ENCODE measurements at regions of chr1 and their contacts with region 1.

Region 1: GRCh38 chr1:200488375-200489165 is 78.7 kb upstream of the ZNF281 start:
- DNase-seq: peak; percentile 85
- ATAC-seq: peak; percentile 93
- H3K4me3 ChIP-seq: no peak overlapping the region
- H3K27ac ChIP-seq: peak overlapping the region; percentile 13
- H3K4me1 ChIP-seq: peaks cover 10% of the 10 kb centered on the region
- H3K27me3 ChIP-seq: no peaks in the 10 kb centered on the region
- CTCF ChIP-seq: peak; percentile 93
- POLR2A ChIP-seq: peak; percentile 53; the same call in 1 of the 2 replicates
- RAD21 ChIP-seq: peak; percentile 95

Region 2: DNA sequence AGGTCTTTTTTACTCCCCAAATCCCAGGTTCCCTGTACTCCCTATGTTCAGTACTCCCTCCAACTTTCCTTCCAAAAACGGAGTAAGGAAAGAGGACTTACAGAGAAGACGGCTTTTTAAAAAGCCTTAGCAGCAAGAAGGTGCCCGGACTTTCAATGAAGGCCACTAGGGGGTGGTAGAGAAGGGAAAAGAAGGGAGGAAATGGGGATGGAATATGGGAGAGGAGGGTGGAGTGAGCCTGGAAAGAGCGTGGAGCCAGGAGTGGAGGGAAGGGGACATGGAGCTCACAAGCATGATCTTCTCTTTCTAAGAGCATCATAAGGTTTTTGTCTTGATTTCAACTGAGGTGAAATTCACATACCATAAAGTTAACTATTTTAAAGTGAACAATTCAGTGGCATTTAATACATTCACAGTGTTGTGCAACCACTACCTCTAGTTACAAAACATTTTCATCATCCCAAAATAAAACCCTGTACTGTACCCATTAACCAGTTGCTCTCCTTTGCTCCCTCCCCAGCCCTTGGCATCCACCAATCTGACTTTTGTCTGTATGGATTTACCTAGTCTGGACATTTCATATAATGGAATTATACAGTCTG is 208.7 kb before region 1 on chr1:
- CTCF ChIA-PET with region 1: interaction called, 4 read pairs
- POLR2A ChIA-PET with region 1: no interaction called
- dilution Hi-C with region 1: no loop called
- in situ Hi-C with region 1: loop called (anchors 5 kb)
- intact Hi-C with region 1: loop called (anchors 1 kb)
- DNase-seq: peak; percentile 60
- ATAC-seq: peak; percentile 88
- H3K4me3 ChIP-seq: no peak overlapping the region
- H3K27ac ChIP-seq: no peak overlapping the region
- H3K4me1 ChIP-seq: peaks cover 3% of the 10 kb centered on the region
- H3K27me3 ChIP-seq: no peaks in the 10 kb centered on the region
- CTCF ChIP-seq: peak; percentile 73
- POLR2A ChIP-seq: 0 out of 2 replicates have a peak, but pooled peaks have one; percentile 30
- RAD21 ChIP-seq: peak; percentile 80

Region 3: DNA sequence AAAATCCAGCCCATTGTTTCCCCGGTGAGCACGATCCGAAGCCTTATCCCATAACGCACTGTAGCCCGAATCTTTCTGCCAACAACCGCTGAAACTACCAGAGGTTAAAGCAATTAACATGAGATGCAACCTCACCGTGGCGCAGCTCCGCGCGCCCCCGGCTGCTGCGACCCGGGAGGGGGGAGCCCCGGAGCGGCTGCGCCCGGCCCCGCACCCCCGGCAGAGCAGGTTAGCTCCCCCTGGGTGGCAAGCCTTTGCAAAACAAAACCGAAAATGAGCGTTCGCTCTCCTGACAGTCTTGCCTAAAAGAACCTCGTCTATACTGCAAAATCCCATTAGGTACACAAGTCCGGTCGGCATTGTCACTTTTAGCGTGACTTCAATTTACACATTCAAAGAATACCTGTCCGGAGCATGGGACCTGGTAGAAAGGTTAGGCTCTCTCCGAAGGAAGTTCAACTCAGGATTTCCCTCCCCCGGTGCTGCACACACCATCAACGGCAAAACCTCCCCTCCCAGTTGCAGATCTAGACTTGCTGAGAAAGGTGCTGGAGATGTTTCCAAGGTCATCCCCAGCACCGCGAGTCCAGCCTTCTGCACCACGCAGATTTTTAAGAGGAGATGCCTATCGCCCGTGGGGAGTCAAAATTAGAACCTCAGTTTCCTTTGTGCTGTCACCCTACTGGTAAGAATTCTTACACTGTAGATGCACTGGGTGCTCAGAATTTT is 186.2 kb before region 1 on chr1:
- CTCF ChIA-PET with region 1: no interaction called
- POLR2A ChIA-PET with region 1: no interaction called
- dilution Hi-C with region 1: no loop called
- in situ Hi-C with region 1: no loop called
- intact Hi-C with region 1: loop called (anchors 10 kb)
- DNase-seq: peak; percentile 47
- ATAC-seq: peak; percentile 83
- H3K4me3 ChIP-seq: peak overlapping the region; percentile 52
- H3K27ac ChIP-seq: no peak overlapping the region
- H3K4me1 ChIP-seq: peaks cover 4% of the 10 kb centered on the region
- H3K27me3 ChIP-seq: no peaks in the 10 kb centered on the region
- CTCF ChIP-seq: 0 out of 2 replicates have a peak, but pooled peaks have one; percentile 6
- POLR2A ChIP-seq: no peak
- RAD21 ChIP-seq: no peak

Region 4: DNA sequence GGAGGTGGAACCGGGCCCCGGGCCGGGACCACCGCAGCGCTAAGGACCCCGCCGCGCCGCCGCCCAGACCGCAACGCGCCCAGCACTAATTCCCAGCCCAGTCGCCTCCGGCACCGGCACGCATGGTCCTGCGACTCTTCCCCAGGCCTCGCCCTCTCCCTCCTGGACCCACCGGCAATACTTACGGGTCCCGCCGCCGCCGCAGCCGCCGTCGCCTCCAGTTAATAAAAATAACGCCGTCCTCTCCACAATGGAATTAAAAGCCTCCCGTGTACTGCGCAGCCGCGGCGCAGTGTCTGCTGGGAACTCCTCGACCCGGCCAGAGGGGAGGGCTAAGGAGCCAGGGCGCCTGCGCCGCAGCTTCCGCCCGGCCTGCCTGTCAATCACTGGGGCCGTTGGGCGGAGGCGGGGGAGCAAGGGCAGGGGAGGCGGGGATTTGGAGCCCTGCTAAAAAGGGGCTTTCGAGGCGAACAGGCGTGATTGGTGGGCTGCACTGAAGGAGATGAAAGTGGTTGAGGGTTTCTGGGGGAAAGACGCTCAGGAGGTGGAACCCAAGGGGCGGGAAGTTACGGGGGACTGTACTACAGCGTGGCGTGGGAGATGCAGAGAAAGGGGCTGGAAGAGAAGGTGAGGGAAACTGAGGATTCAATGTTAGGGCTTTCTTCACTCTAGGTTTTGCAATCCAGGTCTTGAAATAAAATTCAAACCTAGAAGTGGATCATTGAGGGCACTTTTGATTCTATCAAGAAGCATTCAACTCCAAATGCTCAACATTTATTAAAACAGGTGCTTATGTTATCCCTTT is 78.6 kb before region 1 on chr1 and contains the start of gene ZNF281:
- CTCF ChIA-PET with region 1: no interaction called
- POLR2A ChIA-PET with region 1: no interaction called
- dilution Hi-C with region 1: no loop called
- in situ Hi-C with region 1: no loop called
- intact Hi-C with region 1: loop called (anchors 1 kb)
- DNase-seq: peak; percentile 90
- ATAC-seq: peak; percentile 98
- H3K4me3 ChIP-seq: peak within 1 kb of the TSS; percentile 86
- H3K27ac ChIP-seq: peak within 1 kb of the TSS; percentile 98
- H3K4me1 ChIP-seq: peaks cover 13% of the 10 kb centered on the region
- H3K27me3 ChIP-seq: no peaks in the 10 kb centered on the region
- CTCF ChIP-seq: no peak
- POLR2A ChIP-seq: peak; percentile 80
- RAD21 ChIP-seq: no peak
- total RNA-seq, gene ZNF281: 37.5 and 38.0 TPM in 2 replicates

Region 5: GRCh38 chr1:200510228-200510623 is 21.7 kb after region 1 on chr1:
- CTCF ChIA-PET with region 1: no interaction called
- POLR2A ChIA-PET with region 1: no interaction called
- dilution Hi-C with region 1: no loop called
- in situ Hi-C with region 1: no loop called
- intact Hi-C with region 1: no loop called
- DNase-seq: peak; percentile 88
- ATAC-seq: peak; percentile 90
- H3K4me3 ChIP-seq: no peak overlapping the region
- H3K27ac ChIP-seq: no peak overlapping the region
- H3K4me1 ChIP-seq: no peaks in the 10 kb centered on the region
- H3K27me3 ChIP-seq: no peaks in the 10 kb centered on the region
- CTCF ChIP-seq: peak; percentile 91
- POLR2A ChIP-seq: peak; percentile 56; the same call in 1 of the 2 replicates
- RAD21 ChIP-seq: peak; percentile 94

Measured in IMR-90 (cell line).